B cell (primary cell): ENCODE measurements at regions of chr1 and their contacts with region 1.

Region 1: DNA sequence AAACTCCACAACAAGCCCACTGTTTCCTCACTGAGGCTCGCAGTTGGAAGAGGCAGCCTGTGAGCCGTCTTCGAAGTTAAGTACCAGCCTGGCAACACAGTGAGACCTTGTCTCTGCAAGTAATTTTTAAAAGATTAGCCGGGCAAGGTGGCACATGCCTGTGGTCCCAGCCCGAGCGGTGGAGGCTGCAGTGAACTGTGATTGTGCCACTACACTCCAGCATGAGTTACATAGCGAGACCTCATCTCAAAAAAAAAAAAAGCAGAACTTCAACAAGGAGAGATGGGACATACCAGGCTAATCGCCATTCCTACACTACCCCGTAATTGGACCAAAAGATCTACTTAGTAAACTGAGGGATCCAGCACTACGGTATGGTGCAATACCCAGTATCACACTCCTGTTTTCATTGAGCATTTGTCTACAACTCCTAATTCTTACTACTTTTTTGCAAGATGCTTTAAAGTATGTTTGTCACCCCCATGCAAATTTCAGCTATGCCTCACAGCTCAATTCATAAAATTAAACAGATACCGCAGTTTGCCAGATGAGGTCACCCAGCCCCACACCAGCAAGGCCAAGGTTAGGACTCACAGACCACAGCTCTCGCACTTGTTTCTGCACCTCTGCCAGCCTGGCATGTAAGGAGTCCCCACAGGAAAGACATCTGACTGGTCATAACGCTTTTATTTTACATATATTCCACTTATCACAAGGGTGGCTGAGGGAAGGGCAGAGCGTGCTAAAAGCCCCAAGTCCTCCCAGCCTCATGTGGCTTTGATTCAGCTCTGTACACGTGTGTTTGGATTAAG is 21.0 kb downstream of the SDE2 start:
- DNase-seq: peak; percentile 71
- ATAC-seq: peak; percentile 80
- H3K4me3 ChIP-seq: no peak overlapping the region
- H3K4me3 Mint-ChIP-seq: peak overlapping the region; percentile 67
- H3K27ac ChIP-seq: peak overlapping the region; percentile 27 to 38
- H3K27ac Mint-ChIP-seq: peak overlapping the region; percentile 83
- H3K4me1 ChIP-seq: peaks cover 16 to 23% of the 10 kb centered on the region in 2 donors
- H3K4me1 Mint-ChIP-seq: peaks cover 25% of the 10 kb centered on the region
- H3K27me3 ChIP-seq: no peaks in the 10 kb centered on the region
- H3K27me3 Mint-ChIP-seq: no peaks in the 10 kb centered on the region
- CTCF ChIP-seq: peak; percentile 5

Region 2: GRCh38 chr1:225467193-225468020 is 510.7 kb before region 1 on chr1:
- CTCF ChIA-PET with region 1: interaction called, 32 read pairs
- POLR2A ChIA-PET with region 1: interaction called, 3 read pairs
- intact Hi-C with region 1: no loop called
- DNase-seq: peak; percentile 92
- ATAC-seq: peak; percentile 88
- H3K4me3 ChIP-seq: peak overlapping the region; percentile 68 to 83 (median 73)
- H3K4me3 Mint-ChIP-seq: peak overlapping the region; percentile 91
- H3K27ac ChIP-seq: peak overlapping the region; percentile 82 to 97
- H3K27ac Mint-ChIP-seq: peak overlapping the region; percentile 97
- H3K4me1 ChIP-seq: peaks cover 15 to 34% of the 10 kb centered on the region in 2 donors
- H3K4me1 Mint-ChIP-seq: peaks cover 37% of the 10 kb centered on the region
- H3K27me3 ChIP-seq: no peaks in the 10 kb centered on the region
- H3K27me3 Mint-ChIP-seq: no peaks in the 10 kb centered on the region
- CTCF ChIP-seq: no peak

Region 3: GRCh38 chr1:225554216-225554812 is 423.8 kb before region 1 on chr1:
- CTCF ChIA-PET with region 1: interaction called, 11 read pairs
- POLR2A ChIA-PET with region 1: no interaction called
- intact Hi-C with region 1: loop called (anchors 1 kb)
- DNase-seq: peak; percentile 39
- ATAC-seq: no peak
- H3K4me3 ChIP-seq: no peak overlapping the region
- H3K4me3 Mint-ChIP-seq: no peak overlapping the region
- H3K27ac ChIP-seq: no peak overlapping the region
- H3K27ac Mint-ChIP-seq: no peak overlapping the region
- H3K4me1 ChIP-seq: no peaks in the 10 kb centered on the region
- H3K4me1 Mint-ChIP-seq: no peaks in the 10 kb centered on the region
- H3K27me3 ChIP-seq: no peaks in the 10 kb centered on the region
- H3K27me3 Mint-ChIP-seq: peaks cover 3% of the 10 kb centered on the region
- CTCF ChIP-seq: peak; percentile 78

Region 4: DNA sequence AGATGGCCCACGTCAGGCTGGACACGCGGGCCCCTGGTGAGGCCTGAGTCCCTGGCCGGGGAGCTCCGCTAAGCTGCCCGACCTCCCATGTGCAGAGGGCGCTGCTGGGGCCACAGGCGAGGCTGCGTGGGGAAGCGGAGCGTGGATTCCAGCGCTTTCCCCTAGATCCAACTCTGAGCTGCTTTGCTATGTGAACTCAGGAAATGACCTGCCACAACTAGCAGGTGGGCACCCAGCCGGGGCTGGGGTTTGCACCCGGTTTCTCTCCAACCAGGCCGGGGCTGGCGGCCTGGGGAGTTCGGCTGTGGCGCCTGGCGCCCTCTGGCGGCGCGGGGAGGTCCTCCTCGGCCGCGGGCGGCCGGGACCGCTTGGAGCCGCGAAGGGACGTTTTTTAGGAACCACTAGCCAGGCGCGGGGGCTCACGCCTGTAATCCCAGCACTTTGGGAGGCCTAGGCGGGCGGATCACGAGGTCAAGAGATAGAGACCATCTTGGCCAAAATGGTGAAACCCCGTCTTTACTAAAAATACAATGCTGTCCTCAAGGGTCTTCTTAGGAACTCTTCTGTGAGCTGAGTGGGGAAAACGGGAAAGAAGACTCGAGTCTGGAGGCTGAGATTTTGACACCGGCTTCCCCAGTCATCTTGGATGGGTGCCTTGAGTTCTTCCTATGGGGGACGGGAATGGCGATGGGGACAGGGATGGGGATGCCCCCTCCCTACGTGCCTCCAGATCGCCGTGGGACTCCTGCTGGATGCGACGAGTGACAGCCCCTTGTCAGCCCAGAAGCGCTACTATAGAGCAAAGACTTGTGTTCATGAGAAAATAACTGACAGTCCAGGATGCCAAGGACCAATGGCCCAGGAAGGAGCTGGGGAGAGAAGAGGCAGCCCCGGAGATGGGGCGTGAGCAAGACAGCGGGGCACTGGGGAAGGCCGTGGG is 66.7 kb before region 1 on chr1:
- CTCF ChIA-PET with region 1: interaction called, 3 read pairs
- POLR2A ChIA-PET with region 1: no interaction called
- intact Hi-C with region 1: loop called (anchors 1 kb)
- DNase-seq: peak; percentile 80
- ATAC-seq: peak; percentile 85
- H3K4me3 ChIP-seq: no peak overlapping the region
- H3K4me3 Mint-ChIP-seq: no peak overlapping the region
- H3K27ac ChIP-seq: peak overlapping the region in 1 of 2 donors; percentile 29
- H3K27ac Mint-ChIP-seq: peak overlapping the region; percentile 10
- H3K4me1 ChIP-seq: peaks cover 24 to 28% of the 10 kb centered on the region in 2 donors
- H3K4me1 Mint-ChIP-seq: peaks cover 20% of the 10 kb centered on the region
- H3K27me3 ChIP-seq: no peaks in the 10 kb centered on the region
- H3K27me3 Mint-ChIP-seq: no peaks in the 10 kb centered on the region
- CTCF ChIP-seq: peak; percentile 84

Region 5: GRCh38 chr1:225999227-225999911 is 21.2 kb after region 1 on chr1 and contains the start of gene SDE2:
- CTCF ChIA-PET with region 1: interaction called, 19 read pairs
- POLR2A ChIA-PET with region 1: interaction called, 7 read pairs
- intact Hi-C with region 1: no loop called
- DNase-seq: peak; percentile 100
- ATAC-seq: peak; percentile 81
- H3K4me3 ChIP-seq: peak within 1 kb of the TSS; percentile 75 to 93 (median 88)
- H3K4me3 Mint-ChIP-seq: peak within 1 kb of the TSS; percentile 100
- H3K27ac ChIP-seq: peak within 1 kb of the TSS; percentile 100
- H3K27ac Mint-ChIP-seq: peak within 1 kb of the TSS; percentile 97
- H3K4me1 ChIP-seq: peaks cover 65 to 72% of the 10 kb centered on the region in 2 donors
- H3K4me1 Mint-ChIP-seq: peaks cover 74% of the 10 kb centered on the region
- H3K27me3 ChIP-seq: no peaks in the 10 kb centered on the region
- H3K27me3 Mint-ChIP-seq: no peaks in the 10 kb centered on the region
- CTCF ChIP-seq: no peak
- total RNA-seq, gene SDE2: 26.0 and 26.3 TPM in 2 replicates